Activated CD4-positive, alpha-beta T cell treated with anti-CD3 and anti-CD28 coated beads for 36 hours (primary cell): ENCODE measurements at regions of chr17 and their contacts with region 1.

Region 1: DNA sequence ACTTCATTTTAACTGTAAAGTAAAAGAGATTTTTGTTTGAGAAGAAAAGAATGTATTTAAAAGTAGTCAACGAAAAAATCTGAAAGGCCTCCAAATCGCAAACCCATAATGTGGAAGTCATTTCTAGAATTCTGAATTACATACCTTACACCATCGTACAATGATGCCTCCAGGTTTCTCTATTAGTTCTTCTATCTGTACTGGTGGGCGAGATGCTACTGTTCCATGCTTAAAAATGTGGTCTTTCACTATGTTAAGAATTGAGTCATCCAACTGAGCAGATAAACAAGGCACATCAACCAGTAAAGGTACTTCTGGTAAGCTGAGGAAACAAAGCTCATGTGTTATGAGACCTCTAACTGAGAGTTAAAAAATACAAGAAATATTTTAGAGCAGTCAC is 28.5 kb downstream of the CRLF3 start:
- DNase-seq: no peak
- ATAC-seq: peak; percentile 99
- H3K4me3 Mint-ChIP-seq: no peak overlapping the region
- H3K27ac Mint-ChIP-seq: peak overlapping the region; percentile 86
- H3K4me1 Mint-ChIP-seq: peaks cover 28% of the 10 kb centered on the region
- H3K27me3 Mint-ChIP-seq: no peaks in the 10 kb centered on the region

Region 2: DNA sequence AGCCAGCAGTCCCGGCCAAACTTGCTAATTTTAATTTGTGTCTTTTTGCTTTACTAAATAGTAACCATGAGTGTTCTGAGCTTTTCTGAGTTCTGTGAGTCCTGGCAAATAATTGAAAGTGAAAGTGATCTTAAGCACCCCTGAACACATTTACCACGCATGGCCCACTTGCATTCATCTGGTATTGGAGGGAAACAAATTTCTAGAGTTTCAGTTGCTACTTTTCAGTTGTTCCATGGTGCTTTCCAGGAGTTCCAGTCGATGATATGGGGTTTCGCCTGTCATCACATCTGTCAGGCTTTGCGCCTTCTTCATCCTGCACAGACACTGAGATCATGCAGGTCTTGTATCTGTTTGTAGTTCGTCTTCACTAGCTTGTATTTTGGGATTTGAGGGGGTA is 15.7 kb before region 1 on chr17:
- CTCF ChIA-PET with region 1: interaction called, 3 read pairs
- POLR2A ChIA-PET with region 1: interaction called, 15 read pairs
- intact Hi-C with region 1: no loop called
- DNase-seq: peak; percentile 61
- ATAC-seq: peak; percentile 80
- H3K4me3 Mint-ChIP-seq: no peak overlapping the region
- H3K27ac Mint-ChIP-seq: peak overlapping the region; percentile 94
- H3K4me1 Mint-ChIP-seq: peaks cover 20% of the 10 kb centered on the region
- H3K27me3 Mint-ChIP-seq: no peaks in the 10 kb centered on the region

Region 3: GRCh38 chr17:30808785-30809286 is 12.8 kb after region 1 on chr17:
- CTCF ChIA-PET with region 1: interaction called, 6 read pairs
- POLR2A ChIA-PET with region 1: interaction called, 5 read pairs
- intact Hi-C with region 1: loop called (anchors 1 kb)
- DNase-seq: peak; percentile 49
- ATAC-seq: peak; percentile 79
- H3K4me3 Mint-ChIP-seq: peak overlapping the region; percentile 76
- H3K27ac Mint-ChIP-seq: peak overlapping the region; percentile 97
- H3K4me1 Mint-ChIP-seq: peaks cover 71% of the 10 kb centered on the region
- H3K27me3 Mint-ChIP-seq: no peaks in the 10 kb centered on the region

Region 4: GRCh38 chr17:30831663-30832437 is 35.8 kb after region 1 on chr17 and contains the start of gene ATAD5:
- CTCF ChIA-PET with region 1: interaction called, 4 read pairs
- POLR2A ChIA-PET with region 1: interaction called, 3 read pairs
- intact Hi-C with region 1: loop called in 1 of 2 experiments (anchors 1 kb)
- DNase-seq: peak; percentile 94
- ATAC-seq: peak; percentile 92
- H3K4me3 Mint-ChIP-seq: peak within 1 kb of the TSS; percentile 99
- H3K27ac Mint-ChIP-seq: peak within 1 kb of the TSS; percentile 94
- H3K4me1 Mint-ChIP-seq: peaks cover 31% of the 10 kb centered on the region
- H3K27me3 Mint-ChIP-seq: no peaks in the 10 kb centered on the region
- total RNA-seq, gene ATAD5: 33.1 to 40.8 TPM